AG04450 (cell line): ENCODE measurements at regions of chr4 and their contacts with region 1.

Region 1: GRCh38 chr4:76504613-76505465 is 69.8 kb downstream of the SHROOM3 start:
- DNase-seq: peak; percentile 11
- H3K4me3 ChIP-seq: no peak overlapping the region
- H3K27ac ChIP-seq: no peak overlapping the region
- H3K27me3 ChIP-seq: peaks cover 14% of the 10 kb centered on the region
- CTCF ChIP-seq: peak; percentile 73

Region 2: GRCh38 chr4:76470064-76470463 is 34.8 kb before region 1 on chr4:
- CTCF ChIA-PET with region 1: interaction called, 12 read pairs
- POLR2A ChIA-PET with region 1: no interaction called
- DNase-seq: no peak
- H3K4me3 ChIP-seq: no peak overlapping the region
- H3K27ac ChIP-seq: no peak overlapping the region
- H3K27me3 ChIP-seq: peaks cover 7% of the 10 kb centered on the region
- CTCF ChIP-seq: no peak

Region 3: DNA sequence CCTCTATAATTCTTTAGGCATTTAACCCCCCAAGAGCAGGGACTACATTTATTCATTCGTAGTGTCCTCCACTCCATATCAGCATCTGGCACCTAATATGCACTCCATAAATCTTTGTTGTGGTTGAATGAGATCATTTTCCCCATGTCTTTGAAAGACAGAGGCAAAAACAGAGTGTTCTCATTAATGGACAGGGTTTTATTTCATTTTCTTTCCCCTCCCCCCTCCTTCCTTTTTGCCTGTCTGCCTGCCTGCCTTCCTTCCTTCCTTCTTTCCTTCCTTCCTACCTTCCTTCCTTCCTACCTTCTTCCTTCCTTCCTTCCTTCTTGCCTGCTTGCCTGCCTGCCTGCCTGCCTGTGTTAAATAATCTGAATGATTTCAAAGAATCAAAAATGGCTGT is 13.4 kb after region 1 on chr4:
- CTCF ChIA-PET with region 1: interaction called, 14 read pairs
- POLR2A ChIA-PET with region 1: no interaction called
- DNase-seq: no peak
- H3K4me3 ChIP-seq: no peak overlapping the region
- H3K27ac ChIP-seq: no peak overlapping the region
- H3K27me3 ChIP-seq: no peaks in the 10 kb centered on the region
- CTCF ChIP-seq: no peak